Activated CD4-positive, alpha-beta memory T cell treated with anti-CD3 and anti-CD28 coated beads, Interleukin-2, amount 10 ng/mL, durations not matched to agents 7 days and 5 days (primary cell): ENCODE measurements at regions of chr17 and their contacts with region 1.

Region 1: DNA sequence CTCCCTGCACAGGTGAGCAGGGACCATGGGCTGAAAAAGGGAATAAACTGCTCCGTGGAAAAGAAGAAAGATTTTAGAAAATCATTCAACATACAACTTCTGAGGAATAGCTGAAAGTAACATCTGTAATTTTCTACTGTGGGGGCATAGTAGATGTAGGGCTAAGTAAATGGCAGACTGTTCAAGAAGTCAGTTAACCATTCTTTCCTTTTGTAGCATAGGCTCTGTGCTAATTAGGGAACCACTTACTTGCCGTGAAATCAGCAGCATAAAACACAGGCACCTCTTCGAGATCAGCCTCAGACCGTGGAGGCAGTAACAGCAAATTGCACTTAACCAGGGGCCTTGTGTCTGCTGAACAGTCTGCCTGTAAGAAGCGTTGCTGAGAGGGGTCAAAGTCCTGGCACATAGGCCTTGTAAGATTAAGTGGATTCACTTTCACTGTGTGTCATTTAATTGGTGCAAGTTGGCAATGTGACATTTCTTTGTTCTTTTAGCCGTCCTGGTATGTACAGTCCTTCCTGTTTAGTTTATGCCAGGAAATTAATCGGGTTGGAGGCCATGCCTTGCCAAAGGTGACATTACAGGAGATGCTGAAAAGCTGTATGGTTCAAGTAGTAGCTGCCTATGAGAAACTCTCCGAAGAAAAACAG is 10.4 kb downstream of the COG1 start:
- DNase-seq: no peak
- H3K4me3 Mint-ChIP-seq: no peak overlapping the region
- H3K27ac Mint-ChIP-seq: peak overlapping the region; percentile 62
- H3K4me1 Mint-ChIP-seq: peaks cover 15% of the 10 kb centered on the region
- H3K27me3 Mint-ChIP-seq: no peaks in the 10 kb centered on the region

Region 2: DNA sequence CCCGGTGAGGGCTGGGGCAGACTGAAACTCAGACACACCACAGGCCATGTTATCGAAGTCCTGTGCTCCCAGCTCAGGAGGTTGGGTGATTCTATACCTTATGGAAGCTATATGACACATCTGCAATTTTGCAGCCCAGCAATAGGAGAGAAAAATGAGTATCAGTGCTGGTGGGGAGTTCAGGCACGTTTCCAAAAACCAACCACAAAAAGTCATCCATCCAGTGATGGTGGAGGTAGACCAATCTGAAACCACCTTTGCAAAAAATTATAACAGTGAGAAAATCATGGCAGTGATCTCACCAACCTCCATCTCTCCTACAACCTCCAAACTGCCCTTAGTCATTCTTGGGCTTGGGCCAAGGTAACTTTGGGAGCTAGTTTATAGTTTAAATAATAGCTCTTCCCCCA is 438.6 kb before region 1 on chr17:
- CTCF ChIA-PET with region 1: no interaction called
- POLR2A ChIA-PET with region 1: no interaction called
- DNase-seq: no peak
- H3K4me3 Mint-ChIP-seq: no peak overlapping the region
- H3K27ac Mint-ChIP-seq: no peak overlapping the region
- H3K4me1 Mint-ChIP-seq: no peaks in the 10 kb centered on the region
- H3K27me3 Mint-ChIP-seq: no peaks in the 10 kb centered on the region

Region 3: DNA sequence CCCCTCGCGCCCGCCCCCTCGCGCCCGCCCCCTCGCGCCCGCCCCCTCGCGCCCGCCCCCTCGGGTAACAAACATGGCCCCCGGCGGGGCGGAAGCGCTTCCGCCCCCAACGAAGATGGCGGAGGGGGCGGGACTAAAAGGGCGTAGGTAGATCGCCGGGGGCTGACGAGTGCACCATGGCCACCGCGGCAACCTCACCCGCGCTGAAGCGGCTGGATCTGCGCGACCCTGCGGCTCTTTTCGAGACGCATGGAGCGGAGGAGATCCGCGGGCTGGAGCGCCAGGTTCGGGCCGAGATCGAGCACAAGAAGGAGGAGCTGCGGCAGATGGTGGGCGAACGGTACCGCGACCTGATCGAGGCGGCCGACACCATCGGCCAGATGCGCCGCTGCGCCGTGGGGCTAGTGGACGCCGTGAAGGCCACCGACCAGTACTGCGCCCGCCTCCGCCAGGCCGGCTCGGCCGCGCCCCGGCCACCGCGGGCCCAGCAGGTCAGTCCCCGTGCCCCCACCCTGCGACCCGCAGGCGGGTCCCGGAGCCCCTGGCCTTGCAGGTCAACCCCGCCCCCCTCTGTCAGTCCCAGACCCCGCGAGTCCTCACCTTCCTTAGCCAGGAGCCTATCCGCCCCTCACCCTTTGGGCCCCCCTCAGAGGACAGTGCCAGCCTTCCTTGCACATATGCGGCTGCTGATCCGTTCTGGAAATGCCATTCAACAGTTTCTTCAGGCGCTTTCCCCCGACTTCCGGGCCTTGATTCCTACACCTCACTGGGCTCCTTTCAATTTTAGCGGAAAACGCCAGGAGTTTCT is 10.2 kb before region 1 on chr17 and contains the start of gene COG1:
- CTCF ChIA-PET with region 1: interaction called, 3 read pairs
- POLR2A ChIA-PET with region 1: interaction called, 18 read pairs
- DNase-seq: peak; percentile 92
- H3K4me3 Mint-ChIP-seq: peak within 1 kb of the TSS; percentile 95
- H3K27ac Mint-ChIP-seq: peak within 1 kb of the TSS; percentile 94
- H3K4me1 Mint-ChIP-seq: peaks cover 38% of the 10 kb centered on the region
- H3K27me3 Mint-ChIP-seq: no peaks in the 10 kb centered on the region
- total RNA-seq, gene COG1: 30.4 to 32.9 TPM